Vagina (tissue), 2 donors: ENCODE measurements at regions of chr5 and their contacts with region 1.

Region 1: DNA sequence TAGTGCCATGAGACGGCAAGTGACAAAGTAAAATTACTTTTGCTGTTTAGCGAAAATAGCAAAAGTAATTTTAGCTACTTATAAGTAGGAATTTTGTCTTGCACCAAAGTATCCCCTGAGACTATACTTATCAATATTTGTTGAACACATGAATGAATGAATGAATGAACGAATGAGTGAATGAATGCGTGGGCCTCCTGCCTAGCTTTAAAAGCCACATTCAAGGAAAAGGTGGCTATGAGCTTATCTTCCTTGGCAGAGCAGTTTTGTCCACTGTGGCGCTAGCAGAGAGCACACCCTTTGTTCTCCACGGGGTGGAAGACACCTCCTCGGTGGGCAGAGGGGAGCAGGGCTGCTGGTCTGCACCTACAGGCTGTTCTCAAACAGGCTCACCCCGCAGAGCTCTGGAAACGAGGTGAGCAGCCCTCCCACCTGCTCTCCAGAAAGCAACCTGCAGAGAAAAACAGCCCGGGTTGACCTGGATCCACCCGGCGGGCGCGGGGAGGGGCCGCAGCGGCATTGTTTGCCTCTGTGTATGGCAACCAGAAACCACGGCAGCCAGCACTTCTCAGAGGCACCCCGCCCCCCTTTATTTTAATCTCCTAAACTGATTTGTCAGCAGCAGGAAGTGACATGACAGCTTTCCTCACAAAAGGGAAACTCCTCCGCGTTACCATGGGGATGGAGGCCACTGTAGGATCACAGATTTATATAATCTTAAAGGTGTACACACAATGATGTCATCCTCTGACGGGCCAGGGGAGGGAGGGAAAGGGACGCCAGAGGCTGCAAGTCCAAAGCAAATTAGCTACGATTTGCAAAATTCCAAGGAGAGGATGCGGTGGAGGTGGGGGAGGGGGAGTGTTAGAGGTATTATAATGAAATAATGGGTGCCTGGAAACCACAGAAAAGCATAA is 5.9 kb downstream of the DUSP1 start:
- DNase-seq: peak in 1 of 2 donors; percentile 100
- H3K4me3 ChIP-seq: peak overlapping the region; percentile 91 to 99
- H3K27ac ChIP-seq: peak overlapping the region; percentile 98
- H3K4me1 ChIP-seq: peaks cover 39% of the 10 kb centered on the region
- H3K27me3 ChIP-seq: no peaks in the 10 kb centered on the region
- CTCF ChIP-seq: peak in 1 of 3 experiments; percentile 6
- POLR2A ChIP-seq: no peak

Region 2: GRCh38 chr5:172648755-172649154 is 116.4 kb before region 1 on chr5:
- intact Hi-C with region 1: no loop called
- DNase-seq: no peak
- H3K4me3 ChIP-seq: no peak overlapping the region
- H3K27ac ChIP-seq: peak overlapping the region; percentile 88
- H3K4me1 ChIP-seq: peaks cover 30% of the 10 kb centered on the region
- H3K27me3 ChIP-seq: no peaks in the 10 kb centered on the region
- CTCF ChIP-seq: no peak
- POLR2A ChIP-seq: no peak

Region 3: DNA sequence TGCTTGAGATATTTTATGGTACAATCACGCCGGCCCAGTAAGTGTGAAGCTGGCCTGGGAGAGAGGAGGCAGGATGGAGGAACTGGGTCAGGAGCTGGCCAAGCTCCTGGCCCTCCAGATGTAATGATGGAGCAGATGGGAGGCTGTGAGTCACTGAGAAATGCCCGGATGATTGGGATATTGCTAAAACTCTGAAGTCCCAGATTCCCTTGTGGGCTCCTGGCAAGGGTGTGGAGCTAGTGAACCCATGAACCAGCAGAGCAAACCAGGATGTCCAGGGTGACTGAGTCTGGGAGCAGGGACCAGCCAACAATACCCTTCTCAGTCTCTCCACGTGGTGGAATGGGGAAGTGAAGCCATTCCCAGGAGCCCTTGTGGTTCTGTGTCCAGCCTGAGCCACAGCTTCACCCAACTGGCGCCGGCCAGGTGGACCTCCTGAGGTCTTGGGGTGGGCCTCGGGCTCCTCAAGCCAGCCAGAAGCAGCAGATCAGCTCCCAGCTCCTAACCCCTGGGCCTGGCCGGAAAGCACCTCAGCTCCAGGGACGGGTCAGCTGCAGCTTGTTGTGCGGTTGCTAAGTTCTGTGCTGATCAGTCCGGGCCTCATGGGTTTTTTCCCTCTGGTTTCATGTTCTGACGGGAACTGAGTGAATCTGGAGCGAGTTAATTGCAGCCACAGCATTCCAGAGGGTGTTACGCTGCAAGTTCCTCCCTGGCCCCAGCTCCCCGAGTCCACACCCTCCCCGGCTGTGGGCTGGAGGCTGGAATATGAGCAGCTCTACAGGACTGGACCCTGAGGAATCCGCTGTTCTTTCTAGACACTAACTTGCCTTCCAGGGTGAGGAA is 31.8 kb before region 1 on chr5:
- intact Hi-C with region 1: loop called (anchors 5 kb)
- DNase-seq: peak in 1 of 2 donors; percentile 98
- H3K4me3 ChIP-seq: no peak overlapping the region
- H3K27ac ChIP-seq: peak overlapping the region; percentile 95
- H3K4me1 ChIP-seq: peaks cover 35% of the 10 kb centered on the region
- H3K27me3 ChIP-seq: no peaks in the 10 kb centered on the region
- CTCF ChIP-seq: peak in 1 of 3 experiments; percentile 18
- POLR2A ChIP-seq: peak in 1 of 2 donors; percentile 4

Region 4: DNA sequence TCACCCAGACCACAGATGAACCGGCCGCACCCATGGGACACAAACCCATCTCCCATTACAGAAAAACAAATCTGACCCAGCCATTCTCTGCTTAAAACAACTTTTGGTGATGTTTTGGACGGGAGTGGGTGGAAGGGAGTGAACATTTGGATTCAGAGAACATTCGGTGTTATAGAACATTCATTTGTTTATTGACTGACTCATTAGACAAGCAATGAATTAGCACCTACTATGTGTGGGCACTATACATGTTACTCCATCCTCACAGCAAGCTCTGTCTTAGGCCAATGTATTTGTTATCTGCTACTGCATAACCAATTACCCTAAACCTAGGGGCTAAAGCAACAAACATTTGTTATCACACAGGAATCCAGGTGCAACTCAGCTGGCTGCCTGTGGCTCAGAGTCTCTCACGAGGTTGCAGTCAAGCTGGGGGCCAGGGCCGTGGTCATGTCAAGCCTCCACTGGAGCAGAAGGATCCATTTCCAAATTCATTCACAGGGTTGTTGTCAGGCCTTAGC is 63.9 kb after region 1 on chr5:
- intact Hi-C with region 1: no loop called
- DNase-seq: no peak
- H3K4me3 ChIP-seq: no peak overlapping the region
- H3K27ac ChIP-seq: no peak overlapping the region
- H3K4me1 ChIP-seq: peaks cover 7% of the 10 kb centered on the region
- H3K27me3 ChIP-seq: no peaks in the 10 kb centered on the region
- CTCF ChIP-seq: no peak
- POLR2A ChIP-seq: no peak

Region 5: GRCh38 chr5:172902497-172903200 is 137.5 kb after region 1 on chr5:
- intact Hi-C with region 1: loop called (anchors 5 kb)
- DNase-seq: no peak
- H3K4me3 ChIP-seq: no peak overlapping the region
- H3K27ac ChIP-seq: peak overlapping the region; percentile 95
- H3K4me1 ChIP-seq: peaks cover 95% of the 10 kb centered on the region
- H3K27me3 ChIP-seq: no peaks in the 10 kb centered on the region
- CTCF ChIP-seq: no peak
- POLR2A ChIP-seq: no peak

Region 6: DNA sequence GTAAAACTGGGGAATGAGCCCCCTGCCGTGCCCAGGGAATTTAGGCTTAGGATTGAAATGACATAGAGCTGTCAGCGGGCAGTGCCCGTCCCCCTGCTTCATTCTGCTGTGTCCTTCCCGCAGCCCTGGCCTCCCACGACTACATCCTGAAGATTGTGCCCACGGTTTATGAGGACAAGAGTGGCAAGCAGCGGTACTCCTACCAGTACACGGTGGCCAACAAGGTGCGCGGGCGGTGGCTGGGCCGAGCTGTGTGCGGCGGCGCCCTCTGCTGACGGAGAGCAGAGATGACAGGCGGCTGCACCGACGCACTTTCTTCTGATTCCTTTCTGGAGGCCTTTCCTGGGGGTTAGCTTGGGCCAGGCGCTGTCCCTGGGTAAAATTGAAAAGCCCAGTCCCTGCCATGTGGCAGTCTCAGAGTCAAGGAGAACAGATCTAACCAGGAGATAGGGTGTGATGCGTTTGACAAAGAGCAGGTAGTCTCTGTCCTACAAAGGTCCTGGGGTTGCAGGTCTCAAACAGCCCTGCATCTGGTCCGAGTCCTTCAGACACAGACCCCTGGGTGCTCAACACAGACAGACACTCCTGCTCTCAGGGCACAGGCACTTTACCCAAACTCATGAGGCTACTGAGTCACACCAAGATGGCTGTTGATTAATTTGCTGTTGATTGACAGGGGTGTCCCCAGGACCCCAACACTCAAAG is 167.4 kb after region 1 on chr5:
- intact Hi-C with region 1: no loop called
- DNase-seq: no peak
- H3K4me3 ChIP-seq: no peak overlapping the region
- H3K27ac ChIP-seq: peak overlapping the region; percentile 56
- H3K4me1 ChIP-seq: peaks cover 11% of the 10 kb centered on the region
- H3K27me3 ChIP-seq: no peaks in the 10 kb centered on the region
- CTCF ChIP-seq: peak; percentile 94 to 99 (median 97)
- POLR2A ChIP-seq: no peak